Caco-2 (cell line): ENCODE measurements at regions of chr2 and their contacts with region 1.

Region 1: GRCh38 chr2:235746257-235747084 is 252.6 kb downstream of the AGAP1 start:
- DNase-seq: peak; percentile 65 to 69
- H3K4me3 ChIP-seq: no peak overlapping the region
- H3K4me3 Mint-ChIP-seq: no peak overlapping the region
- H3K27ac Mint-ChIP-seq: no peak overlapping the region
- H3K4me1 ChIP-seq: no peaks in the 10 kb centered on the region
- H3K4me1 Mint-ChIP-seq: peaks cover 5% of the 10 kb centered on the region
- H3K27me3 ChIP-seq: no peaks in the 10 kb centered on the region
- H3K27me3 Mint-ChIP-seq: no peaks in the 10 kb centered on the region
- CTCF ChIP-seq: peak; percentile 58 to 63

Region 2: GRCh38 chr2:235433860-235434259 is 312.6 kb before region 1 on chr2:
- CTCF ChIA-PET with region 1: interaction called, 7 read pairs
- POLR2A ChIA-PET with region 1: no interaction called
- intact Hi-C with region 1: loop called (anchors 5 kb)
- DNase-seq: no peak
- H3K4me3 ChIP-seq: no peak overlapping the region
- H3K4me3 Mint-ChIP-seq: no peak overlapping the region
- H3K27ac Mint-ChIP-seq: no peak overlapping the region
- H3K4me1 ChIP-seq: no peaks in the 10 kb centered on the region
- H3K4me1 Mint-ChIP-seq: no peaks in the 10 kb centered on the region
- H3K27me3 ChIP-seq: no peaks in the 10 kb centered on the region
- H3K27me3 Mint-ChIP-seq: peaks cover 4% of the 10 kb centered on the region
- CTCF ChIP-seq: peak in 1 of 2 experiments; percentile 7

Region 3: DNA sequence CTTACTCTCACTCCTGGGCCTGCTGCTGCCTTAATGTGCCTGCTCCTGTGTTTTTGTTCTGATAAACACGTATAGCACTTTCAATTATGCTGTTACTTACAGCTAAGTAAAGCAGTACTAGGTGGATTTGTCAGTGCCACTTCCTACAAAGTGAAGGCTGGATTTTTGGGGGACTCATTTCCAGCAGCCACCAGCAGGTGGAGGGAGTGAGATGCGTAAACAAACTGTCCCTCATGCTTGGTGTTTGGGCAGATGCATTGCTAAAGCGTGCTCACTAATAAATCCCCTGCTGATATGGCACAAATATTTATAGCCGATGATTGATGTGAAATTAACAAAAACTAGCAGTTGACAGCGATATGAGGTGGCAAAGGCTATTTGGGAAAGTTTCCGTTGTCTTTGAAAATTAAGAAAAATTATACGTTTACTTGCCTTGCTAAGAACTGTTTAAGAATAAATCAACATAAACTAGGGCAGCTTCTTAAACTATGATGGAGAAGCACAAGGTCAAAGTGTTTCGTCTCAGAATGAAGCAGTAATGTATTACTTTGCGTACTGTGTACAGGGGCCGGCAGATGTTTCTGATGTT is 151.0 kb before region 1 on chr2:
- CTCF ChIA-PET with region 1: interaction called, 23 read pairs
- POLR2A ChIA-PET with region 1: no interaction called
- intact Hi-C with region 1: loop called (anchors 1 kb)
- DNase-seq: peak; percentile 45 to 65
- H3K4me3 ChIP-seq: no peak overlapping the region
- H3K4me3 Mint-ChIP-seq: no peak overlapping the region
- H3K27ac Mint-ChIP-seq: no peak overlapping the region
- H3K4me1 ChIP-seq: no peaks in the 10 kb centered on the region
- H3K4me1 Mint-ChIP-seq: peaks cover 6% of the 10 kb centered on the region
- H3K27me3 ChIP-seq: no peaks in the 10 kb centered on the region
- H3K27me3 Mint-ChIP-seq: no peaks in the 10 kb centered on the region
- CTCF ChIP-seq: peak; percentile 64 to 72

Region 4: DNA sequence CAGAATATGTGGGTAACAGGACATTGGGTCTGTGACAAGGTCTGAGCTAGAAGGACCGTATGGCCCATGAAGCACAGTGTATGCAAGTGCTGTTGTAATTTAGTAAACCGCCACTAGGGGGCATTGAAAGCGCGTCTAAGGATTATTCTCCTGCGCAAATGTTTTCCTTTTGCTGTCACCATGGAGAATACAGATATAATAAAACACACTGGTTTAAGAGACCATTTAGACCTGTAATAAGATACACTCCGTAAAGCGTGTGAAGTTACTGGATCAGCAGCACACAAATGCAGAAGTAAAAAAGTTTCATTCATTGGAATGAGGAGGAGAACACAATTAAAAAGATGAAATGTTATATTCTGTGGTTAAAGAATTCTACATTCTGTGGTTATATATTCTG is 19.8 kb after region 1 on chr2:
- CTCF ChIA-PET with region 1: interaction called, 10 read pairs
- POLR2A ChIA-PET with region 1: no interaction called
- intact Hi-C with region 1: no loop called
- DNase-seq: peak; percentile 51 to 73
- H3K4me3 ChIP-seq: no peak overlapping the region
- H3K4me3 Mint-ChIP-seq: no peak overlapping the region
- H3K27ac Mint-ChIP-seq: peak overlapping the region; percentile 80
- H3K4me1 ChIP-seq: no peaks in the 10 kb centered on the region
- H3K4me1 Mint-ChIP-seq: no peaks in the 10 kb centered on the region
- H3K27me3 ChIP-seq: no peaks in the 10 kb centered on the region
- H3K27me3 Mint-ChIP-seq: no peaks in the 10 kb centered on the region
- CTCF ChIP-seq: peak; percentile 59 to 70

Region 5: GRCh38 chr2:236235185-236235584 is 488.7 kb after region 1 on chr2:
- CTCF ChIA-PET with region 1: no interaction called
- POLR2A ChIA-PET with region 1: no interaction called
- intact Hi-C with region 1: no loop called
- DNase-seq: no peak
- H3K4me3 ChIP-seq: no peak overlapping the region
- H3K4me3 Mint-ChIP-seq: no peak overlapping the region
- H3K27ac Mint-ChIP-seq: no peak overlapping the region
- H3K4me1 ChIP-seq: no peaks in the 10 kb centered on the region
- H3K4me1 Mint-ChIP-seq: no peaks in the 10 kb centered on the region
- H3K27me3 ChIP-seq: no peaks in the 10 kb centered on the region
- H3K27me3 Mint-ChIP-seq: peaks cover 5% of the 10 kb centered on the region
- CTCF ChIP-seq: no peak